H1 (cell line): ENCODE measurements at regions of chr11 and their contacts with region 1.

Region 1: GRCh38 chr11:12043959-12044819 is 35.8 kb upstream of the DKK3 start:
- DNase-seq: peak; percentile 27 to 87
- H3K4me3 ChIP-seq: no peak overlapping the region
- H3K27ac ChIP-seq: no peak overlapping the region
- H3K4me1 ChIP-seq: no peaks in the 10 kb centered on the region
- H3K27me3 ChIP-seq: no peaks in the 10 kb centered on the region; a peak in 2 of 7 replicates
- CTCF ChIP-seq: peak; percentile 89 to 93 (median 91)
- EP300 ChIP-seq: no peak
- POLR2A ChIP-seq: no peak
- RAD21 ChIP-seq: peak; percentile 95 to 96

Region 2: DNA sequence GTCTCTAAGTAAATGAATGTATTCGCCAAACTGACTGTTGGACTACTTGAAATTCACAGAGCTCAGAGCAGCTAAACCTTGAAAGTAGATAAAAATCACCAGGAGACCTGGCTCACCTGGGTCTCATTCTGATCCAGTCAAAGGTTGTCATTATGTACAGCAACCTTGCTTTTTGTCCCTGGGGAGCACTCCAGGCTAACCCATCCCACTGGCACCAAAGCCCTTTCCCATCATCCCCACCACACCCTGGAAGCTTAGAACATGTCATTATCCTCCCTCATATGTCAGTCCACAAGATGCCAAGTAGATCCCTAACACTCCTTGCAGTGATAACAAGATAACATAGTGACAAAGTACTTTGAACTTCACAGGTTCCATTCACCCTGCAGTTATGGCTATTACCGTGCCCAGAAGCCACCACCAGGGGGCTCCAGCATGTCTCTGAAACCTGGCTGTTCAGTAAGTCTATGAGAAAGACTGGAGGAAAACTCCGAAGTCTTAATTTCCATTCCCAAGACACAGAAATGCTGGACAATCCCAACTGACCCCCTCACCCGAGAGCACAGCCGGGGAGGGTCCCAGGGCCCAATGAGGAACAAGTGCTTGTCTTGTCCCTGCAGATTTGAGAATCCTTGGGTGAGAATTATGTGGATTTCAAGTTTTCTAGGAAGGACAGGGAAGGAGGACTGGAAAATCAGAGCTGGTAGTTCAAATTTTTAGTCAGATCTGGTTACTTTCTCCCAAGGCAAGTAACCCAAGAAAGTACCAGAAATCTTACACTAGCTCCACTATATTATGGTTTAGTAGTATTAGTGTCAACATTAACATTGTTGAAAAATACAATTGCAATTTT is 245.4 kb before region 1 on chr11:
- CTCF ChIA-PET with region 1: interaction called, 18 read pairs
- POLR2A ChIA-PET with region 1: no interaction called
- DNase-seq: peak in 1 of 2 experiments; percentile 89
- H3K4me3 ChIP-seq: no peak overlapping the region
- H3K27ac ChIP-seq: no peak overlapping the region
- H3K4me1 ChIP-seq: no peaks in the 10 kb centered on the region
- H3K27me3 ChIP-seq: no peaks in the 10 kb centered on the region; a peak in 1 of 7 replicates
- CTCF ChIP-seq: peak; percentile 60 to 91 (median 89)
- EP300 ChIP-seq: no peak
- POLR2A ChIP-seq: no peak
- RAD21 ChIP-seq: peak; percentile 81 to 88

Region 3: GRCh38 chr11:11850668-11851067 is 193.5 kb before region 1 on chr11:
- CTCF ChIA-PET with region 1: no interaction called
- POLR2A ChIA-PET with region 1: no interaction called
- DNase-seq: no peak
- H3K4me3 ChIP-seq: no peak overlapping the region
- H3K27ac ChIP-seq: no peak overlapping the region
- H3K4me1 ChIP-seq: peaks cover 0 to 3% (median 0%) of the 10 kb centered on the region in 4 experiments; a peak in 4 of 7 replicates
- H3K27me3 ChIP-seq: no peaks in the 10 kb centered on the region
- CTCF ChIP-seq: no peak
- EP300 ChIP-seq: no peak
- POLR2A ChIP-seq: no peak
- RAD21 ChIP-seq: no peak

Region 4: GRCh38 chr11:11977206-11977938 is 66.8 kb before region 1 on chr11:
- CTCF ChIA-PET with region 1: interaction called, 10 read pairs
- POLR2A ChIA-PET with region 1: no interaction called
- DNase-seq: peak in 1 of 2 experiments; percentile 47
- H3K4me3 ChIP-seq: no peak overlapping the region
- H3K27ac ChIP-seq: no peak overlapping the region
- H3K4me1 ChIP-seq: peaks cover 0 to 3% (median 2%) of the 10 kb centered on the region in 4 experiments; a peak in 4 of 7 replicates
- H3K27me3 ChIP-seq: no peaks in the 10 kb centered on the region
- CTCF ChIP-seq: no peak
- EP300 ChIP-seq: no peak
- POLR2A ChIP-seq: no peak
- RAD21 ChIP-seq: no peak

Region 5: GRCh38 chr11:12029738-12030363 is 14.3 kb before region 1 on chr11:
- CTCF ChIA-PET with region 1: interaction called, 18 read pairs
- POLR2A ChIA-PET with region 1: no interaction called
- DNase-seq: no peak
- H3K4me3 ChIP-seq: no peak overlapping the region
- H3K27ac ChIP-seq: no peak overlapping the region
- H3K4me1 ChIP-seq: no peaks in the 10 kb centered on the region
- H3K27me3 ChIP-seq: no peaks in the 10 kb centered on the region
- CTCF ChIP-seq: no peak
- EP300 ChIP-seq: no peak
- POLR2A ChIP-seq: no peak
- RAD21 ChIP-seq: no peak

Region 6: DNA sequence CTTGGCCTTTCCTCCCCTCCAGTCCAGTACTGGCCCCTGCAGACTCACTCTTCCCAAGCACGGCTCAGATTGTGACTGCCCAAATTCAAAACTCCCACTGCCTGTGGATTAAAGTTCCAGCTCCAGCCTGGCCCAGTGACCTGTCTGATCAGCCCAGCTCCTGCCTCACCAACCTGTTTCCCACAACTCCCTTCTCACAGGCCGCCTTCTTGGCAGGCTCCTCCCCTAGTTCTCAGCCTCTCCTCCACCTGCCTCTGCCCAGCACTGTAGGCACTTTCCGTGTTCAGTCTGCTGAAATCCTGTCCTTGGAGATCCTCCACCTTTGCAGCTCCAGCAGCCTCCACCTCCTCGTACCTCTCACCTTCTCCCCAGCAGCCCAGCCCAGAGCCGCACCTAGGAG is 134.8 kb after region 1 on chr11:
- CTCF ChIA-PET with region 1: no interaction called
- POLR2A ChIA-PET with region 1: no interaction called
- DNase-seq: peak in 1 of 2 experiments; percentile 39
- H3K4me3 ChIP-seq: no peak overlapping the region
- H3K27ac ChIP-seq: no peak overlapping the region
- H3K4me1 ChIP-seq: peaks cover 0 to 4% (median 0%) of the 10 kb centered on the region in 4 experiments; a peak in 1 of 7 replicates
- H3K27me3 ChIP-seq: no peaks in the 10 kb centered on the region
- CTCF ChIP-seq: no peak
- EP300 ChIP-seq: no peak
- POLR2A ChIP-seq: no peak
- RAD21 ChIP-seq: no peak

Region 7: DNA sequence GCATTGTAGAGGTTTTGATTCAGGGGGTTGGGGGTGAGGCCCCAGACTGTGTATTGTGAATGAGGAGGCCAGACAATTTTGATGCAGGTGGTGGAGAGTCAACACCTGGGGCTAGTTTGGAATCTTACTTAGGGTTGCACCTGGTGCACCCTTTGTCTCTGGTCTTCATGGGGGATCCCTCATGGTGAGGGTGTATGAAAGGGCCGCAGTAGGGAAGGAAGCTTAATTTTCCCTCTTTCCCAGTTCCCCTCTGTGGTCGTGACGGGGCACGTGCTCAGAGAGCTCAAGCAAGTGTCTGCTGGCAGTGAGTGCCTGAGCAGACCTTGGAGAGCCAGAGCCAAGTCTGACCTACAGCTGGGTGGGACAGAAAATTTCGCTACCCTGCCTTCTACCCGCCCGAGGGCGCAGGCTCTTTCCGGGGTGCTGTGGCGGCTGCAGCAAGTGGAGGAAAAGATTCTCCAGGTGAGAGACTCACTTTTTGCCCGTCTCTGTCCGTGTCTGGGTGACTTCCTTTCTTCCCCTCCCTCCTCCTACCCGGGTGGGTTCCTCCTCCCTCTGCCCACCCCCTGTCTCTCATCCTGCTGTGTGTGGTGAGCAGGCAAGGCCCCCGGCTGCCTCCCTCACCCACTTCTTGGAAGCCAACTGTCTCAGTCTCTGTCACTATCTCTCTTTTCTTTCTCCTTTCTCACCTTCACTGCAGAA is 197.9 kb after region 1 on chr11:
- CTCF ChIA-PET with region 1: interaction called, 76 read pairs
- POLR2A ChIA-PET with region 1: no interaction called
- DNase-seq: no peak
- H3K4me3 ChIP-seq: no peak overlapping the region
- H3K27ac ChIP-seq: no peak overlapping the region
- H3K4me1 ChIP-seq: peaks cover 0 to 12% (median 4%) of the 10 kb centered on the region in 4 experiments; a peak in 3 of 7 replicates
- H3K27me3 ChIP-seq: no peaks in the 10 kb centered on the region
- CTCF ChIP-seq: no peak
- EP300 ChIP-seq: no peak
- POLR2A ChIP-seq: no peak
- RAD21 ChIP-seq: no peak